Dendritic cell treated with granulocyte-macrophage colony-stimulating factor and Interleukin-4, amounts not matched to agents 40 ng/mL and 50 ng/mL, for 4 days (primary cell): ENCODE measurements at regions of chr10 and their contacts with region 1.

Region 1: GRCh38 chr10:79249186-79250121 is 97.8 kb upstream of the PPIF start:
- H3K4me3 Mint-ChIP-seq: no peak overlapping the region
- H3K27ac Mint-ChIP-seq: peak overlapping the region; percentile 87
- H3K4me1 Mint-ChIP-seq: peaks cover 100% of the 10 kb centered on the region
- H3K27me3 Mint-ChIP-seq: no peaks in the 10 kb centered on the region

Region 2: DNA sequence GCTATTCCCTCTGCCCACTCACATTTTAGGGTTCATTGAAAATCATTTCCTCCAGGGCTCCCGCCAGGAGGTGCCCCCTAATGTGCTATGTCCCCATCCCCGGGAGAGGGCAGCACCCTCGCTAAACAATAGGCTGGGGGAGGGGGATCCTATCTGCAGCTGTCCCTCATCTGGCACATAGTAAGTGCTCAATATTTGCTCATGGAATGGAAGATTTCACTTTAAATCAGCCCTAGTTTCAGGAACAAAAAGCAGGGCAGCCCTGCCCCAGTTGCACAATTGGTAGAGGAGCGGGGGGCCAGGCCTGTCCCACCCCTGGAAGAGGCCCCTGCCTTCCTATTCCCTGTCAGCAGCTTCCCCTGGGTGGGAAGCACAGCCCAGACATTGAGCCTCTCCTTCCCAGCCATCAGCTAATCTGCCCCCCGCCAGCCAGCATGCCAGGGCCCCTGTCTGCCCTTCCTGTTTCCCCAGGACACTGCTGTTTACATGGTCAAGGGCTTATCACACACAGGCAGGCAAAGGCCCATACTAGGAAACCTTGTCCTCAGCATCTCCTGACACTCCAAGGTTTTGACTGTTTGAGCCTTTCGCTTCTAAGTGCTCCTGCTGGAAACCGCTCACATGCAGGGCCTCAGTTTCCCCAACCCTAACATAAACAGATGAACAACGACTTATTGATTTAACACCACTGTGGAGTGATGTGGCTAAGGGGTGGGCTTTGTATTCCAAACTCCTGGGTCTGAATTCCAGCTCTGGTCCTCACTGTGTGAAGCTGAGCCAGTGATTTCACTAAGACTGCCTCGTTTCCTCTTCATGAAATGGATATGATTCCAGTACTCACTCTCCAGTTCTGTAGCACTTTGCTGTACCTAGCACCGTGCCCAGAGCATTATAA is 311.4 kb before region 1 on chr10:
- intact Hi-C with region 1: no loop called
- H3K4me3 Mint-ChIP-seq: no peak overlapping the region
- H3K27ac Mint-ChIP-seq: peak overlapping the region; percentile 63
- H3K4me1 Mint-ChIP-seq: peaks cover 40% of the 10 kb centered on the region
- H3K27me3 Mint-ChIP-seq: peaks cover 11% of the 10 kb centered on the region

Region 3: GRCh38 chr10:79184145-79184625 is 65.3 kb before region 1 on chr10:
- intact Hi-C with region 1: no loop called
- H3K4me3 Mint-ChIP-seq: no peak overlapping the region
- H3K27ac Mint-ChIP-seq: no peak overlapping the region
- H3K4me1 Mint-ChIP-seq: peaks cover 92% of the 10 kb centered on the region
- H3K27me3 Mint-ChIP-seq: no peaks in the 10 kb centered on the region

Region 4: DNA sequence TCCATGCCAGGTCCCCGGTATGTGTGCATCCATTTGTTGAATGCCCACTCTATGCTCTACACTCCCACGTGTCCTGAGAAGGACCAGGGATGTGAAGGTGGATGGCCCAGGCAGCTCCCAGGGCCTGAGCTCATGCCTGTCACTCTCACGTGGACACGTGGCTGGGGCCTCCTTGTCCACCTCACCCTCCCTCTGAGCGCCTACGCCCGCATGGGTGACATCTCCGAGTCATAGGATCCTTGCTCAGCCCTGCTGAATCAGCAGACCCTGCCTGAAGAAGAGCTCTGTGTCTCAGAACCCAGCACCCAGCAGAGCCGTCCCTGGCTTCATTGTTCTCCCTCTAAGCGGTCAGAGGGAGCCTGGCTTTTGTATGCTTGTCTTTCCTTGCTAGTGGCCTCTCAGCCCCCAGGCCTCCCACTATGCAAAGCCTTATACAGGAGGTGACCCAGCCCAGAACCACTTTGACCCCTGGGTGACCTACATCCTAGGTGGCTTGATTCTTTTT is 10.1 kb before region 1 on chr10:
- intact Hi-C with region 1: loop called (anchors 1 kb)
- H3K4me3 Mint-ChIP-seq: no peak overlapping the region
- H3K27ac Mint-ChIP-seq: peak overlapping the region; percentile 87
- H3K4me1 Mint-ChIP-seq: peaks cover 84% of the 10 kb centered on the region
- H3K27me3 Mint-ChIP-seq: no peaks in the 10 kb centered on the region

Region 5: GRCh38 chr10:79266543-79267312 is 17.3 kb after region 1 on chr10:
- intact Hi-C with region 1: loop called (anchors 2 kb)
- H3K4me3 Mint-ChIP-seq: peak overlapping the region; percentile 57
- H3K27ac Mint-ChIP-seq: peak overlapping the region; percentile 91
- H3K4me1 Mint-ChIP-seq: peaks cover 99% of the 10 kb centered on the region
- H3K27me3 Mint-ChIP-seq: no peaks in the 10 kb centered on the region

Region 6: GRCh38 chr10:79293841-79294634 is 44.6 kb after region 1 on chr10:
- intact Hi-C with region 1: loop called (anchors 2 kb)
- H3K4me3 Mint-ChIP-seq: peak overlapping the region; percentile 49
- H3K27ac Mint-ChIP-seq: peak overlapping the region; percentile 91
- H3K4me1 Mint-ChIP-seq: peaks cover 98% of the 10 kb centered on the region
- H3K27me3 Mint-ChIP-seq: no peaks in the 10 kb centered on the region

Region 7: GRCh38 chr10:79610601-79611191 is 361.2 kb after region 1 on chr10 and contains the start of gene SFTPA1:
- intact Hi-C with region 1: no loop called
- H3K4me3 Mint-ChIP-seq: no peak within 1 kb of the TSS
- H3K27ac Mint-ChIP-seq: no peak within 1 kb of the TSS
- H3K4me1 Mint-ChIP-seq: no peaks in the 10 kb centered on the region
- H3K27me3 Mint-ChIP-seq: peaks cover 1% of the 10 kb centered on the region